Activated CD8-positive, alpha-beta T cell treated with anti-CD3 and anti-CD28 coated beads for 36 hours (primary cell): ENCODE measurements at regions of chr15 and their contacts with region 1.

Region 1: DNA sequence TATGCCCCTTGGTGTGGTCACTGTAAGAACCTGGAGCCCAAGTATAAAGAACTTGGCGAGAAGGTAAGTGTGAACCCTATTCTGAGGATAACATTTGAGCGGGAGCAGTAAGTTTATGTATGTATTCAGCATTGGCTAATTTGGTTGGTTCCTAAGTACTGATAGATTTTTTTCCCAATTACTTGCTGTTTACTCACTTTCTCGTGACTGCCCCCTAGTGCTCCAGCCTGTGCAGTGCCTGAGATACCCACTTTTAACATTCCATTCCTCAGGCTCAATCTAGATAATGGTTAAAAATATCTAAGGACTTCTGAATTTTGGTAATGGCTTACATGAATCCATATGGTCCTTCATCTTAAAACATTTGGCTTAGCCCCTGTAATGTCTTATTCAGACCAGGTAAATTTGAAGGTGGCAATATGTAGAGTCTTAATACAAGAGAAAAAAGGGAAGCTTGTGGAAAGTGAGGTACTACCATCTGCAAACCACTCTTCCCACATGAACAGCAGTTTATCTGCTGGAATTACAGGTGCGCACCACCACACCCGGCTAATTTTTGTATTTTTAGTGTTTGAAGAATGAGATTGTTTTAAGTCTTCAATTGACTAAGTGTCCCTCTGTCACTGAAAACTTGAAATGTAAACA is 7.1 kb downstream of the ELL3 start:
- DNase-seq: peak; percentile 80
- ATAC-seq: peak; percentile 91
- H3K4me3 Mint-ChIP-seq: no peak overlapping the region
- H3K27ac Mint-ChIP-seq: no peak overlapping the region
- H3K4me1 Mint-ChIP-seq: no peaks in the 10 kb centered on the region
- H3K27me3 Mint-ChIP-seq: no peaks in the 10 kb centered on the region
- CTCF ChIP-seq: peak; percentile 87

Region 2: GRCh38 chr15:43749690-43750345 is 19.9 kb before region 1 on chr15:
- CTCF ChIA-PET with region 1: interaction called, 52 read pairs
- POLR2A ChIA-PET with region 1: interaction called, 13 read pairs
- intact Hi-C with region 1: no loop called
- DNase-seq: peak; percentile 69
- ATAC-seq: peak; percentile 43
- H3K4me3 Mint-ChIP-seq: peak overlapping the region; percentile 96
- H3K27ac Mint-ChIP-seq: peak overlapping the region; percentile 85
- H3K4me1 Mint-ChIP-seq: peaks cover 45% of the 10 kb centered on the region
- H3K27me3 Mint-ChIP-seq: no peaks in the 10 kb centered on the region
- CTCF ChIP-seq: no peak